CD8-positive, alpha-beta memory T cell (primary cell): ENCODE measurements at regions of chr4 and their contacts with region 1.

Region 1: GRCh38 chr4:2604614-2605280 is 68.3 kb downstream of the FAM193A start:
- DNase-seq: no peak
- H3K4me3 ChIP-seq: no peak overlapping the region
- H3K4me3 Mint-ChIP-seq: no peak overlapping the region
- H3K27ac ChIP-seq: no peak overlapping the region
- H3K27ac Mint-ChIP-seq: peak overlapping the region in 4 of 8 donors; percentile 2 to 60 (median 7)
- H3K4me1 ChIP-seq: peaks cover 6% of the 10 kb centered on the region
- H3K4me1 Mint-ChIP-seq: peaks cover 39 to 53% (median 42%) of the 10 kb centered on the region in 3 donors
- H3K27me3 ChIP-seq: no peaks in the 10 kb centered on the region
- H3K27me3 Mint-ChIP-seq: no peaks in the 10 kb centered on the region

Region 2: DNA sequence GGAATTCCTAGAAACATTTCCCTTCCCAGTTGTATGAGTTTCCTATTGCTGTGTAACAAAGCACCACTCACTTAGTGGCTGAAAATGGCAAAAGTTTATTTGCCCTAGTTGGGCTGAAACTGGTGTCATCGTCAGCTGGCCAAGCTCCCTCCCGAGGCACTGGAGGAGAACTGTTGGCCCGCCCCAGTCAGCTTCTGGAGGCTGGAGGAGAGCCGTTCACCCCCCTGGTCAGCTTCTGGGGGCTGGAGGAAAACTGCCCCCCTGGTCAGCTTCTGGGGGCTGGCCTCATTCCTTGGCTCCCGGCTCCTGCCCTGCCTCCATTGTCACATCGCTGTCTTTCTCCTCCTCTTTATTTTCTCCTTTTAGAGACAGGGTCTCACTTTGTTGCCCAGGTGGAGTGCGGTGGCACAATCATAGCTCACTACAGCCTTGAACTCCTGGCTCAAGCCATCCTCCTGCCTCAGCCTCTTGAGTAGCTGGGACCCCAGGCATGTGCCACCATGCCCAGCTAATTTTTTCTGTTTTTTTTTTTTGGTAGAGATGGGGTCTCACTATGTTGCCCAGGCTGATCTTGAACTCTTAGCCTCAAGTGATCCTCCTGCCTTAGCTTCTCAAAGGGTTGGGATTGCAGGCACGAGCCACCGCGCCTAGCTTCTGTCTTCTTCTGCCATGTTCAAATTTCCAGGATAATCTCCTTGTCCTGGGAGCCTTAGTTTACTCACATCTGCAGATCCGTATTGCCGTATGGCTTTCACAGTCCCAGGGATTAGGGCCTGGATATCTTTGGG is 691.3 kb after region 1 on chr4:
- CTCF ChIA-PET with region 1: no interaction called
- POLR2A ChIA-PET with region 1: interaction called, 10 read pairs
- DNase-seq: no peak
- H3K4me3 ChIP-seq: no peak overlapping the region
- H3K4me3 Mint-ChIP-seq: peak overlapping the region in 2 of 7 donors; percentile 21 to 78
- H3K27ac ChIP-seq: no peak overlapping the region
- H3K27ac Mint-ChIP-seq: peak overlapping the region in 1 of 8 donors; percentile 27
- H3K4me1 ChIP-seq: peaks cover 6% of the 10 kb centered on the region
- H3K4me1 Mint-ChIP-seq: peaks cover 14 to 26% (median 21%) of the 10 kb centered on the region in 3 donors
- H3K27me3 ChIP-seq: no peaks in the 10 kb centered on the region
- H3K27me3 Mint-ChIP-seq: peaks cover 3 to 7% of the 10 kb centered on the region in 2 donors